ENCODE measurements at regions of chr20 and their contacts with region 1.

Region 1: GRCh38 chr20:17617551-17618223 is 47.8 kb downstream of the DSTN start:
- DNase-seq: peak; percentile 51
- H3K4me3 Mint-ChIP-seq: no peak overlapping the region
- H3K27ac Mint-ChIP-seq: no peak overlapping the region
- H3K4me1 Mint-ChIP-seq: peaks cover under 1% of the 10 kb centered on the region
- H3K27me3 Mint-ChIP-seq: no peaks in the 10 kb centered on the region
- CTCF ChIP-seq: peak; percentile 66

Region 2: DNA sequence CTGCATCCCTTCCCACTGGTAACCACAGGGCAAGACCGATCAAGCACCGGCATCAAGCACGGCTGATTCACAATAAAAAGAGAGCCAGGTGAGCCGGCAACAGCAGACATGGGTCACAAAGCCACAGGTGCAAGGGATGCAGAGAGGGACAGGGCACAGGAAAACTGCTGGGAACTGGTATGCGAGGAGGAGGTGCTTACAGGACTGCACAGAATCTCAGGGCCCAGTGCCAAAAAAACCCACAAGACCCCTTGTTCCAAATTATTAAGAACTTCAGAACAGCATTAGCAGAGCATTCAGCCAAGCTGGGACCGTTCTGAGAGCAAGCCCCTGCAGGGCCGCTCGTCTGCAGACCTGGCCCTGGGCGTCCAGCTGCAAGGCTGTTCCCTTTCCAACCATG is 121.9 kb before region 1 on chr20:
- CTCF ChIA-PET with region 1: interaction called, 11 read pairs
- POLR2A ChIA-PET with region 1: no interaction called
- intact Hi-C with region 1: no loop called
- DNase-seq: no peak
- H3K4me3 Mint-ChIP-seq: no peak overlapping the region
- H3K27ac Mint-ChIP-seq: no peak overlapping the region
- H3K4me1 Mint-ChIP-seq: peaks cover 6% of the 10 kb centered on the region
- H3K27me3 Mint-ChIP-seq: no peaks in the 10 kb centered on the region
- CTCF ChIP-seq: no peak

Region 3: DNA sequence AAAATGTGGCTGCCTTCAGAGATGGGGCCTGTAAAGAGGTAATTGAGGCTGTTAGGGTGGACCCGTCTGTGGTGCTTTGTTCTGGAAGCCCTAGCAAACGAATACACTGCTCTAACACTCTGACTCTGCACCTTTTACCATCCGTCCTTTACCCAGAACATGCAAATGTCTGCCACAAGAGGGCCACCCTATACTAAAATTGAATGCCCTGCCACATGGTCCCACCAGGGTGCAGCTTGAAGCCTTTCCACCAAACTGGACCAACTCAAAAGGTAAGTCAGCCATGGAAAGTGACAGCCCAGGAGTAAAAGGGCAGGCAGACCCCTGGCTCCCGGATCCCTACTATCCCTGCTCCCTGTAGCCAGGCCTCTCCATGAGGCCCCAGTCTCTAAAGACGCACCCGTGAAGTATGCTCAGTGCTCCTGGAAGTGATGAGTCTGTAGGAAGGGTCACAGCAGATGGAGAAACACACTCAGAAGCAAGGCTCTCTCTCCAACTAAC is 80.7 kb before region 1 on chr20:
- CTCF ChIA-PET with region 1: interaction called, 43 read pairs
- POLR2A ChIA-PET with region 1: interaction called, 3 read pairs
- intact Hi-C with region 1: loop called (anchors 1 kb)
- DNase-seq: peak; percentile 83
- H3K4me3 Mint-ChIP-seq: no peak overlapping the region
- H3K27ac Mint-ChIP-seq: no peak overlapping the region
- H3K4me1 Mint-ChIP-seq: peaks cover 20% of the 10 kb centered on the region
- H3K27me3 Mint-ChIP-seq: no peaks in the 10 kb centered on the region
- CTCF ChIP-seq: peak; percentile 84

Region 4: GRCh38 chr20:17604852-17605660 is 12.6 kb before region 1 on chr20:
- CTCF ChIA-PET with region 1: interaction called, 24 read pairs
- POLR2A ChIA-PET with region 1: interaction called, 3 read pairs
- intact Hi-C with region 1: no loop called
- DNase-seq: no peak
- H3K4me3 Mint-ChIP-seq: no peak overlapping the region
- H3K27ac Mint-ChIP-seq: no peak overlapping the region
- H3K4me1 Mint-ChIP-seq: no peaks in the 10 kb centered on the region
- H3K27me3 Mint-ChIP-seq: no peaks in the 10 kb centered on the region
- CTCF ChIP-seq: no peak

Region 5: DNA sequence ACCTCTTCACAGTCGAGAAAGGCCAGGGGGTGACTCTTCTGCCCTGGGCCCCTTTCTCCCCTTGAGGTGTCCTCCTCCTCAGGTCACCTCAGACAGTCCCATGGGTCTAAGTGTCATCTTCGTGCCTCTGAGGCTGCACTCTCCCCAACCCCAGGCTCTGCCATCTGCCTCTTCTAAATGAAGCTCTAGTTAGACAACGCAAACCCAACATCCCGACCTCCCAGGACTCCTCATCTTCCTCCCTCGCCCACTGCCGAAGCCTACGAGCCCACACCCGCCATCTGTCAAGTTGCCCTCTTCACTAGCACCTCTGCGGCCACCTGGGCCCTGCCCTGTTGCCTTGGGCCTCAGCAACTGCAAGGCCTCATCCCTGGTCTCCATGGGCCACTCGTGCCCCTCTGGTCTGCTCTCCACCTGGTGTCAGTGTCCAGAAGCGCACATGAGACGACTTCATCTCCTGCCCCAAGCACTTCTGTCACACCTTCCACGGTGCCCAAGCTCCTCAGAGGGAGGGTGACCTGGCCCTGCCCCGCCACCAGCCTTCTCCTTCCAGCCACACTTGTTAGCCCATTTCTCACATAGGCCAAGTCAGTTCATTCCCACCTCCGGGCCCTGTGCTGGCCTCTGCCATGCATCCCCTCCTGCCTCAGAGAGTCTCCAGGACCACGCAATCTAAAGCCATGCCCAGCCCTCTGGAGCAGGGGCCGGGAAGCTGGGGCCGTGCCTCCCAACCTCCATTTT is 10.6 kb after region 1 on chr20:
- CTCF ChIA-PET with region 1: interaction called, 15 read pairs
- POLR2A ChIA-PET with region 1: interaction called, 3 read pairs
- intact Hi-C with region 1: no loop called
- DNase-seq: no peak
- H3K4me3 Mint-ChIP-seq: no peak overlapping the region
- H3K27ac Mint-ChIP-seq: peak overlapping the region; percentile 23
- H3K4me1 Mint-ChIP-seq: no peaks in the 10 kb centered on the region
- H3K27me3 Mint-ChIP-seq: no peaks in the 10 kb centered on the region
- CTCF ChIP-seq: no peak

Region 6: GRCh38 chr20:17648791-17649730 is 31.4 kb after region 1 on chr20:
- CTCF ChIA-PET with region 1: interaction called, 10 read pairs
- POLR2A ChIA-PET with region 1: no interaction called
- intact Hi-C with region 1: no loop called
- DNase-seq: no peak
- H3K4me3 Mint-ChIP-seq: no peak overlapping the region
- H3K27ac Mint-ChIP-seq: no peak overlapping the region
- H3K4me1 Mint-ChIP-seq: no peaks in the 10 kb centered on the region
- H3K27me3 Mint-ChIP-seq: no peaks in the 10 kb centered on the region
- CTCF ChIP-seq: peak; percentile 26

Region 7: DNA sequence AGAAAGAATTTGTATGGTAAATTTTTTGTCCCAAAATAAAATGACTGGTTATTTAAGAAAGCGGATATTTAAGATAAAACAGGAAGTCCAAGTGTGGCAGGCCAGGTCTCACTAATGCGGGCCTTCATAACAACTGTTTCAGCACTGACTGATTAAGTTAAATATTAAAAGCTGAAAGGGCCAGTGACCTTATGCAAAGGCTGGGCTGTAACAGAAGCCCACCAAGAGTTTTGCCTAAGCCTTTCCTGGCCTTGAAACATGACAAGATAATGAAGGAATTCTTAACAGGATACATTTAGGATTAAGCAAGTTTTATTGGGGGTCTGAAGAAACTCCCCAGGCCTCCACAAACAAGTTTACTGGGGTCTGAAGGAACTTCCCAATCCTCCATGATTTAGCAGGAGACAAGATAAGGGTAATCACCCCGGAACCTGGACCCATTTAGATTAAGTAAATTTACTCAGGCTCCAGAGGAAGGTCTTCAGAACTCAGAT is 707.0 kb after region 1 on chr20:
- CTCF ChIA-PET with region 1: no interaction called
- POLR2A ChIA-PET with region 1: no interaction called
- intact Hi-C with region 1: no loop called
- DNase-seq: no peak
- H3K4me3 Mint-ChIP-seq: no peak overlapping the region
- H3K27ac Mint-ChIP-seq: no peak overlapping the region
- H3K4me1 Mint-ChIP-seq: no peaks in the 10 kb centered on the region
- H3K27me3 Mint-ChIP-seq: no peaks in the 10 kb centered on the region
- CTCF ChIP-seq: no peak

Measured in MCF 10A (cell line).